ENCODE measurements at regions of chr5 and their contacts with region 1.

Region 1: GRCh38 chr5:149422366-149423048 is 43.4 kb upstream of the IL17B start:
- DNase-seq: peak; percentile 89
- H3K4me3 ChIP-seq: 0 out of 4 replicates have a peak overlapping the region, but pooled peaks of 1 of the 2 experiments have one; percentile 3
- H3K27ac ChIP-seq: peak overlapping the region; percentile 82 to 100
- H3K4me1 ChIP-seq: peaks cover 21 to 79% of the 10 kb centered on the region in 2 experiments
- H3K27me3 ChIP-seq: no peaks in the 10 kb centered on the region
- CTCF ChIP-seq: no peak
- EP300 ChIP-seq: peak; percentile 82 to 99
- RAD21 ChIP-seq: peak; percentile 39

Region 2: GRCh38 chr5:149381987-149382340 is 40.5 kb before region 1 on chr5:
- CTCF ChIA-PET with region 1: interaction called, 1,751 read pairs
- POLR2A ChIA-PET with region 1: interaction called, 16 read pairs
- DNase-seq: peak; percentile 93
- H3K4me3 ChIP-seq: no peak overlapping the region; a peak in 1 of 4 replicates
- H3K27ac ChIP-seq: peak overlapping the region in 1 of 2 experiments; percentile 73; a peak in 1 of 4 replicates
- H3K4me1 ChIP-seq: peaks cover 0 to 48% of the 10 kb centered on the region in 2 experiments; a peak in 1 of 4 replicates
- H3K27me3 ChIP-seq: no peaks in the 10 kb centered on the region
- CTCF ChIP-seq: peak; percentile 91
- EP300 ChIP-seq: no peak
- RAD21 ChIP-seq: peak; percentile 94

Region 3: DNA sequence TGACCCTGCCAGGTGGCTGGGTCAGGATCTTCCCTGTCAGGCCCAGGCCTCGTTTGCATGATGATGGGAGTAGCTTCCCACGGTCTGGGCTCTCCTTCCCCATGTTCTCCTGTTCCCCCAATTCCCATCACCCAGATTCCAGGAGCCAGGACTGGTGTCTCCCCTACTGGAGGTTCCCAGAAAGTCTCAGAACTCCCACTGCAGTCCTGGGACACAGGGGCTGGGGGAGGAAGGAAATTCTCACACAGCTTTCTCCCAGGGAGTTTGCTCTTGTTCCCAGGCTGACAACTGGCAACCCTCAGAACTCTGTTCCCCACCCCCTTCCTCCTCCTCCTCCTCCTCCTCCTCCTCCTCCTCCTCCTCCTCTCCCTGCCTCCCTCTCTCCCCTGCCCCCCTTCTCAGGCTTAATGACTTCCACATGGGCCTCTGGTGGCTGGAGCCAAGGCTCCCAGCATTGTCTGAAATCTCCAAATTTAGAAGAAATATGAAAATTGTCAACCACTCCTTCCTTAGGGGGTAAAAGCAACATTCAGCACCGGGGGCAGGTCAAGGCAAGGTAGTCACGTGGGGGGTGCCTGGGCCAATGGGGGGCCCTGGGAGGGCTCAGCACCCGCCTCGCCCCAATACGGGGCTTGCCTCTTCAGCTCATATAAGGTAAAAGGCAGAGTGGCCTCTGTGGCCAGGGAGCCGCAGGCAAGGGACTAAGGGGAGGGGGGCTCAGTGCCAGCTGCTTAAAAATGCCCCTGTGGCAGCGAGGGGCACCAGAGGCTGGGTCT is 16.1 kb before region 1 on chr5:
- CTCF ChIA-PET with region 1: interaction called, 15 read pairs
- POLR2A ChIA-PET with region 1: interaction called, 30 read pairs
- DNase-seq: peak; percentile 83
- H3K4me3 ChIP-seq: peak overlapping the region; percentile 53 to 72
- H3K27ac ChIP-seq: peak overlapping the region; percentile 81 to 90
- H3K4me1 ChIP-seq: peaks cover 44 to 61% of the 10 kb centered on the region in 2 experiments
- H3K27me3 ChIP-seq: no peaks in the 10 kb centered on the region
- CTCF ChIP-seq: peak; percentile 22
- EP300 ChIP-seq: peak in 1 of 2 experiments; percentile 60; a peak in 2 of 4 replicates
- RAD21 ChIP-seq: no peak

Measured in SK-N-SH (cell line).